ENCODE measurements at regions of chr1 and their contacts with region 1.

Region 1: DNA sequence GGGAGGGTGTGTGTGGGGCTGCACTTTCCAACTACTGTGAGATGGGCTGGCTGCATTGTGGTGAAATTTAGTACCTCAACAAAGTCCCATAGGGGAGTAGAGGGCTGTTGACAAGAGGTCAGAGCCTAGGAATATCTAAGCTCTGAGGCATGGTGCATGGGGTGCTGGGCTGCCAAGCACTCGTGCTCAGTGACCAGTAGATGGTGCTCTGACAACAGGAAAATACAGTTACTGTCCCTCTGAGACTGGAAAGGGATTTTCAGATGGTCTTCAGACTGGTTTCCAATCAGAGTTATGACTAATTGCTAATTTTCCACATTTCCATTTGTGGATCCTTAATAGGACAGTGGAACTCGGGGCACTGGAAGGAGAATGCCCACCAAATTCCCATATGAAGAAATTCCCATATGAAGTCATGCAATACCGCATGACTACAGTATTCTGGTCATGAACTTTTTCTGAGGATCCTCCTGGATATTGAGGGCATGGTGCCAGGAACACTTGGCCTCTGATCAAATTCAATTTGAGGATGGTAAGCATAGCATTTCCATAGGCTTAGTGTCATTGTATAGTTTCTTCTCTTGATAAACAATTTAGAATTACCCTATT is 4.1 kb upstream of the CACNA1E start:
- DNase-seq: peak; percentile 70 to 73 (median 71)
- ATAC-seq: peak; percentile 92
- H3K4me3 ChIP-seq: no peak overlapping the region
- H3K27ac ChIP-seq: no peak overlapping the region
- H3K4me1 ChIP-seq: peaks cover 0 to 10% of the 10 kb centered on the region in 2 experiments; a peak in 2 of 5 replicates
- H3K27me3 ChIP-seq: peaks cover 16 to 32% of the 10 kb centered on the region in 2 experiments
- CTCF ChIP-seq: peak; percentile 73 to 89 (median 89)
- EP300 ChIP-seq: no peak
- POLR2A ChIP-seq: no peak
- RAD21 ChIP-seq: peak; percentile 88 to 91

Region 2: DNA sequence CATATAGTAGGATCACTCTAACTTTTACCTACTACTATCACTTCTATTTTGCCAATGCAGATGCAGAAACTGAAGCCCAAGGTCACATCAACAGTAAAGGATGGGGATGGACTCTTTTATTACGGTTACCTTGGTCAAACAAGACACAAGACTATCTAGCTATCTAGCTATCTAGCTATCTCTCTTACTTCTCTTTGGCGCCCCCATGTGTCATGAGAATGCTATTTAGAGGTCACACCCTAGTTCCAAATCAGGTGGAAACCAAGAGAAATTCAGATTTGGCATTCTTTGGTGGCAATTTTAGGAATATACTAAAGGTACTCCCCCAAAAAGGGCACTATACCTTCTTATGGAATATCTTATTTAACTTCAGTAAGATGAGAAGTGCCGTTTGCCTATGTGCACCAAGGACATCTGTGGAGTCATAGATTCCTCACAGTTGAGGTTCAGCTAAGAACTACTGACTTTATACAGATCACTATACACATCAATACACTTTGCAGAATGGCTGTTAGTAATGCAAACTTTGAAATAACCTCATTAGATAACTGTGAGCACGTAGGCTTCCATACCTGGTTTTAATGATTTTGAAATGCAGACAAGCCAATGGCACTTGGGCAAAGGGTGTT is 575.6 kb after region 1 on chr1:
- CTCF ChIA-PET with region 1: no interaction called
- POLR2A ChIA-PET with region 1: no interaction called
- in situ Hi-C with region 1: loop called (anchors 10 kb)
- intact Hi-C with region 1: loop called (anchors 1 kb)
- DNase-seq: peak; percentile 47 to 70 (median 51)
- ATAC-seq: peak; percentile 85
- H3K4me3 ChIP-seq: no peak overlapping the region
- H3K27ac ChIP-seq: no peak overlapping the region
- H3K4me1 ChIP-seq: peaks cover 0 to 12% of the 10 kb centered on the region in 2 experiments; a peak in 1 of 5 replicates
- H3K27me3 ChIP-seq: peaks cover 27 to 30% of the 10 kb centered on the region in 2 experiments
- CTCF ChIP-seq: peak; percentile 59 to 79 (median 69); a peak in 5 of 6 replicates
- EP300 ChIP-seq: no peak
- POLR2A ChIP-seq: no peak
- RAD21 ChIP-seq: peak; percentile 61 to 77

Region 3: DNA sequence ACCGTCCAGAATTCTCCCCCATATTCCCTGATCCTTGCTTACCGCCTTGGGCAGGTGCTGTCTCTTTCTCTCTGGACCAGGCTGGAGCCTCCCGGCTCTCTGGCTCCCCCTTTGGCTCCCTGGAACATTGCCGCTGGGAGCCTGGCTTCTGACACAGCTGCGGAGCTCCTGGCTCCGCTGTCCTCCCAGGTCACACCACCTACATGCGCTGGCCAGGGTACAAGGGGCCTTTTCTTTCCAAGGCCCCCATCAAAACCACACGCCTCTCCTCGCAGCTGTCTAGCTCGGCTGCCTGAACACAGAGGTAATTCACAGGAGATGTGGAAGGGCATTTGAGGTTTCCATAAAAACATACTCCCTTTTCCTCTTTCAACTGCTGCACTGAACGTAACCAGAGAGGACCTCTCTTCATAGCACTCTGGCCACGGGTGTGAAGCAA is 589.8 kb after region 1 on chr1:
- CTCF ChIA-PET with region 1: no interaction called
- POLR2A ChIA-PET with region 1: no interaction called
- in situ Hi-C with region 1: loop called (anchors 10 kb)
- intact Hi-C with region 1: no loop called
- DNase-seq: peak; percentile 78 to 83 (median 82)
- ATAC-seq: peak; percentile 100
- H3K4me3 ChIP-seq: no peak overlapping the region
- H3K27ac ChIP-seq: no peak overlapping the region
- H3K4me1 ChIP-seq: no peaks in the 10 kb centered on the region; a peak in 1 of 5 replicates
- H3K27me3 ChIP-seq: peaks cover 3 to 15% of the 10 kb centered on the region in 2 experiments; a peak in 4 of 5 replicates
- CTCF ChIP-seq: peak; percentile 84 to 89 (median 87)
- EP300 ChIP-seq: no peak
- POLR2A ChIP-seq: no peak
- RAD21 ChIP-seq: peak in 1 of 2 experiments; percentile 49; a peak in 3 of 4 replicates

Measured in K562 (cell line).